CD8-positive, alpha-beta T cell (primary cell): ENCODE measurements at regions of chr17 and their contacts with region 1.

Region 1: GRCh38 chr17:74457146-74457819 is 9.2 kb upstream of the CD300A start:
- DNase-seq: peak; percentile 54 to 83 (median 71)
- ATAC-seq: peak; percentile 62
- H3K4me3 ChIP-seq: no peak overlapping the region
- H3K4me3 Mint-ChIP-seq: no peak overlapping the region
- H3K27ac ChIP-seq: no peak overlapping the region
- H3K27ac Mint-ChIP-seq: no peak overlapping the region
- H3K4me1 ChIP-seq: peaks cover 38% of the 10 kb centered on the region
- H3K4me1 Mint-ChIP-seq: peaks cover 32% of the 10 kb centered on the region
- H3K27me3 ChIP-seq: no peaks in the 10 kb centered on the region
- H3K27me3 Mint-ChIP-seq: peaks cover 3% of the 10 kb centered on the region
- CTCF ChIP-seq: peak; percentile 91

Region 2: DNA sequence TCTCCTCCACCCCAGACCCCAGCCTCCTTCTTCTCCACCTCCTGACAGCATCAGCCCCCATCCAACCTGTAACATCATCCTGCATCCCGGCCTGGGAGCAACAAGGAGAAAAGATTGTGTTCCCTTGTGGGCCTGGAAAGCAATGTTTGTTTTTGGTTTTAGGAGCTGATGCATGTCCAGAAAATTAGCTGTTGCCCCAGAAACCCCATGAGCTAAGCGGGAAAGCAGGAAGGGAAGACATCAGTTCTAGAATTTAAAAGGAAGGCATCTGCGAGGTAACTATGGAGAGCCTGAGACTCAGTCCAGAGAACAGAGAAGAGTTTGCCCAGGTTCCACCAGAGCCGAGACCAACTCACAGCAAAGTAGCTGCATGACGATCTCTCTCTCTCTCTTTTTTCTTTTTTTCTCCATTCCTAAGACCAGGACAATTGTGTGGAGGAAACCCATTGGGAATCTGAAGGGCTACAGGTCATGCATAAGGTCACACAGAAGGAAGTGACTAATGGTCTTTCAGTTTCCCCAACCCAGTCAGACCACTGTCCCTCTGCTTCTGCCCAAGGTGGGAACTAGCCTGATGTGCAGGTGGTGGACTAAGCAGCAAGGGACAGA is 1489.2 kb before region 1 on chr17:
- CTCF ChIA-PET with region 1: no interaction called
- POLR2A ChIA-PET with region 1: no interaction called
- intact Hi-C with region 1: no loop called
- DNase-seq: no peak
- ATAC-seq: no peak
- H3K4me3 ChIP-seq: no peak overlapping the region
- H3K4me3 Mint-ChIP-seq: no peak overlapping the region
- H3K27ac ChIP-seq: no peak overlapping the region
- H3K27ac Mint-ChIP-seq: no peak overlapping the region
- H3K4me1 ChIP-seq: no peaks in the 10 kb centered on the region
- H3K4me1 Mint-ChIP-seq: no peaks in the 10 kb centered on the region
- H3K27me3 ChIP-seq: no peaks in the 10 kb centered on the region
- H3K27me3 Mint-ChIP-seq: no peaks in the 10 kb centered on the region
- CTCF ChIP-seq: no peak

Region 3: GRCh38 chr17:74203439-74204240 is 253.6 kb before region 1 on chr17 and contains the start of gene RPL38:
- CTCF ChIA-PET with region 1: interaction called, 5 read pairs
- POLR2A ChIA-PET with region 1: no interaction called
- intact Hi-C with region 1: loop called (anchors 2 kb)
- DNase-seq: peak; percentile 87 to 98 (median 95)
- ATAC-seq: peak; percentile 93
- H3K4me3 ChIP-seq: peak within 1 kb of the TSS; percentile 96 to 100
- H3K4me3 Mint-ChIP-seq: peak within 1 kb of the TSS; percentile 99
- H3K27ac ChIP-seq: peak within 1 kb of the TSS; percentile 84 to 93
- H3K27ac Mint-ChIP-seq: peak within 1 kb of the TSS; percentile 97
- H3K4me1 ChIP-seq: peaks cover 36% of the 10 kb centered on the region
- H3K4me1 Mint-ChIP-seq: peaks cover 45% of the 10 kb centered on the region
- H3K27me3 ChIP-seq: peaks cover 0 to 7% of the 10 kb centered on the region in 2 experiments
- H3K27me3 Mint-ChIP-seq: peaks cover 12% of the 10 kb centered on the region
- CTCF ChIP-seq: peak; percentile 78
- total RNA-seq, gene RPL38: 2,036 to 2,081 TPM

Region 4: GRCh38 chr17:74296548-74296936 is 160.7 kb before region 1 on chr17:
- CTCF ChIA-PET with region 1: interaction called, 3 read pairs
- POLR2A ChIA-PET with region 1: no interaction called
- intact Hi-C with region 1: loop called (anchors 1 to 10 kb)
- DNase-seq: peak in 4 of 9 experiments; percentile 34 to 59 (median 56)
- ATAC-seq: no peak
- H3K4me3 ChIP-seq: no peak overlapping the region
- H3K4me3 Mint-ChIP-seq: no peak overlapping the region
- H3K27ac ChIP-seq: no peak overlapping the region
- H3K27ac Mint-ChIP-seq: no peak overlapping the region
- H3K4me1 ChIP-seq: no peaks in the 10 kb centered on the region
- H3K4me1 Mint-ChIP-seq: peaks cover 9% of the 10 kb centered on the region
- H3K27me3 ChIP-seq: no peaks in the 10 kb centered on the region
- H3K27me3 Mint-ChIP-seq: peaks cover 3% of the 10 kb centered on the region
- CTCF ChIP-seq: no peak

Region 5: GRCh38 chr17:74368092-74369081 is 88.9 kb before region 1 on chr17:
- CTCF ChIA-PET with region 1: interaction called, 65 read pairs
- POLR2A ChIA-PET with region 1: no interaction called
- intact Hi-C with region 1: loop called (anchors 1 kb)
- DNase-seq: peak; percentile 49 to 84 (median 78)
- ATAC-seq: peak; percentile 83
- H3K4me3 ChIP-seq: peak overlapping the region; percentile 3 to 26
- H3K4me3 Mint-ChIP-seq: peak overlapping the region; percentile 54
- H3K27ac ChIP-seq: no peak overlapping the region
- H3K27ac Mint-ChIP-seq: no peak overlapping the region
- H3K4me1 ChIP-seq: peaks cover 16% of the 10 kb centered on the region
- H3K4me1 Mint-ChIP-seq: peaks cover 12% of the 10 kb centered on the region
- H3K27me3 ChIP-seq: peaks cover 0 to 3% of the 10 kb centered on the region in 2 experiments
- H3K27me3 Mint-ChIP-seq: peaks cover 6% of the 10 kb centered on the region
- CTCF ChIP-seq: peak; percentile 85

Region 6: GRCh38 chr17:74446551-74447500 is 10.5 kb before region 1 on chr17:
- CTCF ChIA-PET with region 1: interaction called, 12 read pairs
- POLR2A ChIA-PET with region 1: no interaction called
- intact Hi-C with region 1: no loop called
- DNase-seq: peak in 3 of 9 experiments; percentile 18 to 50 (median 29)
- ATAC-seq: no peak
- H3K4me3 ChIP-seq: no peak overlapping the region
- H3K4me3 Mint-ChIP-seq: no peak overlapping the region
- H3K27ac ChIP-seq: no peak overlapping the region
- H3K27ac Mint-ChIP-seq: no peak overlapping the region
- H3K4me1 ChIP-seq: peaks cover 5% of the 10 kb centered on the region
- H3K4me1 Mint-ChIP-seq: peaks cover 2% of the 10 kb centered on the region
- H3K27me3 ChIP-seq: no peaks in the 10 kb centered on the region
- H3K27me3 Mint-ChIP-seq: peaks cover 4% of the 10 kb centered on the region
- CTCF ChIP-seq: no peak

Region 7: DNA sequence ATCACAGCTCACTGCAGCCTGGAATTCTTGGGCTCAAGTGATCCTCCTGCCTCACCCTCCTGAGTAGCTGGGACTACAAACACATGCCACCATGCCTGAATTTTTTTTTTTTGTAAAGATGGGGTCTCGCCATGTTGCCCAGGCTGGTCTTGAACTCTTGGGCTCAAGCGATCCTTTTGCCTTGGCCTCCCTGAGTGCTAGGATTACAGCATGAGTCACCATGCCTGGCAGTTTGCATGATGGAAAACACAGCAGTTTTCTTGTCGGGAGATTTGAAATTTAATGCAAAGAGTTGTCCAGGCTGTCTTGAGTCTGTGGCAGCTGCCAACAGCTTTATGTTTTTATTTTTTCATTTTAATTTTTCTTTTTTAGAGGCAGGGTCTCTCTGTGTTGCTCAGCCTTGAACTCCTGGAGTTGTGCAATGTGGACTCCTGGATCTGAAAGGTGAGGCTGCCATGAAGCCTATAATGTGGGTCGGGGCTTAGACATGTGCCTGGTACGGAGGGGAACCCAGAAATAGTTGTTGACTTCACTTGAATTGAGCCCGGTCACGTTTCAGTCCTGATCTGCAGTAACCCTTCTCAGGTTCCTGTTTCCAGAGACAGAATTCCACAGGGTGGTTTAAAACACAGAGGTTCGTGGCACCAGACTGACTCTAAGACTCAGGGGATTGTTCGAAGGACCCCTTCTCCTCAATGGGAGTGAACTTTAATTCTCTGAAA is 27.9 kb after region 1 on chr17:
- CTCF ChIA-PET with region 1: interaction called, 136 read pairs
- POLR2A ChIA-PET with region 1: no interaction called
- intact Hi-C with region 1: no loop called
- DNase-seq: no peak
- ATAC-seq: no peak
- H3K4me3 ChIP-seq: no peak overlapping the region
- H3K4me3 Mint-ChIP-seq: no peak overlapping the region
- H3K27ac ChIP-seq: no peak overlapping the region
- H3K27ac Mint-ChIP-seq: no peak overlapping the region
- H3K4me1 ChIP-seq: peaks cover 3% of the 10 kb centered on the region
- H3K4me1 Mint-ChIP-seq: peaks cover 7% of the 10 kb centered on the region
- H3K27me3 ChIP-seq: no peaks in the 10 kb centered on the region
- H3K27me3 Mint-ChIP-seq: no peaks in the 10 kb centered on the region
- CTCF ChIP-seq: no peak